Left lung (tissue), 14 donors: ENCODE measurements at regions of chr9 and their contacts with region 1.

Region 1: DNA sequence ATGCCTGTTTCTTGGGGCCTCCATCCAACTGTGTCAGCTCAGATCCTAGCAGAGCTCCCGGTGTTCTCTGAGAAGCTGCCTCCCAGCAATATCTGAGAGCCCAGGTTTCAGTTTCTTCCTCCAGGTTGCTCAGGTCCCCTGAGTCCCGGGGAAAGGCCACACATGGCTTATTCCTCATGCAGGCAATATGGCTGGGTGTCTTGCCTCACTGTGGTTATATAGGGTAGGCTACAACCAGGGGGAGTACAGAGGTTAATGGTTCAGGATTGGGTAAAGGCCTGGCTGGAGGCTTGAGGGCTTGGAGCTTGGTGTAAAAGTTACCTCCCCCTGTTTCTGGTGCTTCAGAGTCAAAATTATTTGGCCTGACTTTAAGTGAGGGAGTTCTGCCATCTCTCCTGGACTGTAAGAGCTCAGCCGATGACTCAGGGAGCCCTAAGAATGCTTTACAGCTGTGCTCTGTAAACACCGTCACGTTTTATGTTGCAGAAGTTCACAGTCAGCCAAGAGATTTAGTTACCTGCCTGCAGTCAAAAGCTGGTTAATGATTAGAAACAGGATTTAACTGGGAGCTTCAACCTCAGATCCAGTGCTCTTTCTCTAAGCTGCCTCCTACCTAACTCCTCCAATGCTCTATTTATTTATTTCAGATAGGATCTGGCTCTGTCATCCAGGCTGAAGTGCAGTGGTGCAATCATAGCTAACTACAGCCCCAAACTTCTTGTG is 24.3 kb upstream of the UBAP2 start:
- DNase-seq: peak in 2 of 4 donors; percentile 53 to 59
- ATAC-seq: peak; percentile 89
- H3K4me3 ChIP-seq: no peak overlapping the region
- H3K27ac ChIP-seq: peak overlapping the region; percentile 30 to 79
- H3K4me1 ChIP-seq: peaks cover 0 to 10% of the 10 kb centered on the region in 2 donors
- H3K27me3 ChIP-seq: no peaks in the 10 kb centered on the region
- CTCF ChIP-seq: no peak

Region 2: DNA sequence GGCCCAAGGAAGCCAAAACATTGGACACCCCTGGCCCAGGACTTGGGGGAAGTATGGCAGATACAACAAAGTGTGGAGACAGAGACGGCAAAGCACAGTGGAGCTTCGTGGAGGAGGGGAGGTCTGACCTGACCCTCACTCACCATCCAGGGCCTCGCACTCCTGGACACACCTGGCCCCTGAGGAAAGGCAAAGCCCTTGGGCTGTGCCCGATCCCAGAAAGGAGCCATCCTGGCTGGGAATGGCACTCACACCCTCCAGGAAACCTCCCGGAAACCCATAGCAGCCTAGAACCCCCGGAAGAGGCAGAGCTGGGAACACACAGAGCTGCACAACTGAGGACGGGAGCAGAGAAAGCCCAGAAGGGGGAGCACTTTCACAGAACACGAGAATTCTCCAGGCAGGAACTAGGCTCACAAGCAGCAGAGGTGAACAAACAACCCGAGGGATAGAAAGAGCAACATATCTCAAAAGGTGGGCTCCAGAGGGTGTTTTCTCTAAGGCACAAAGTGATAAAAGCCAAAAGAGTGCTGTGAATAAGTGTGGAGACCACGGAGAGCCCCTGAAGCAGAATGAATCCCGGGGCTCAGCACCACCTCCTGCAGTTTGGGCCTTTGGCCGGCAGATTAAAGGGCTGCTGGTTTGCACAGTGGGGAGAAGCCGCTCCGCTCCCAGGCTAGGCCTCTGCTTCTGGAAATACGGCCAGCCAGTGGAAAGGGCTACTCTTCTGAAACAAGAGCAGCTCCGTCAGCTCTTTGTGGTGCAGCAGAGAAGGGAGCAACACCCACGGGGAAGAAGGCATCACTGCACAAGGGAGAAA is 147.8 kb before region 1 on chr9:
- intact Hi-C with region 1: loop called in 1 of 2 experiments (anchors 10 kb)
- DNase-seq: peak in 1 of 4 donors; percentile 48
- ATAC-seq: peak; percentile 48
- H3K4me3 ChIP-seq: no peak overlapping the region
- H3K27ac ChIP-seq: no peak overlapping the region
- H3K4me1 ChIP-seq: no peaks in the 10 kb centered on the region
- H3K27me3 ChIP-seq: no peaks in the 10 kb centered on the region
- CTCF ChIP-seq: peak in 1 of 2 donors; percentile 21